GM10248 (cell line): ENCODE measurements at regions of chr22 and their contacts with region 1.

Region 1: DNA sequence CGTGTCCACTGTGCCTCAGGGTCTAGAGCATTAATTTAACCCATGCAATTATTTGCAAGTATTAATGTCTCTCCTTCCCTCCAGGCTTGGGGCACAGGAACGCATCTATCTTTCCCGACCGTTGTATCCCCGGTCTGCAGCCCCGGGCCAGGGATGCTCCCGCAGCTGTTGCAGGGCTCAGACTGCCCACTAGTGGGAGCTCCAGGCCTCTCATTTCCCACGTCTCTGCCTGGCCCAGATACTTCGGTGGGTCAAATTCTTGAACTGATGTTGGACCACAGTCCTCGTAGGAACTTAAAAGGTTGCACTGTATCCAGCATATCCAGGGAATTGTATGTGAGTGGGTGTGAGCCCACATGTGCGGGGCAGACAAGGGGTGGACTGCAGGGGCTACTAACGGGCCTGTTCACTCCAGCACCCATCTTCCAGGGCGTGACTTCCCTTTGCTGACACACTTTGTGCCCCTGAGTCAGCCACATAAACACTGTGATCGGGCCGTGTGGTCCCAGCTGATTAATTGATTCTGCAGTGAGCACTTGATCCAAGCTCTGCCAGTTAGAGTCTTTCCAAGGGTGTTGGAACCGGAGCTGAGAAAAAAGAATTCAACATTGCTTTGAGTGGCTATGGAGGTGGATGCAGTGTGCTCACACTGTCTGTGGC is 451.3 kb downstream of the TBC1D22A start:
- DNase-seq: peak; percentile 67
- CTCF ChIP-seq: peak; percentile 78

Region 2: GRCh38 chr22:47200273-47201051 is 13.2 kb before region 1 on chr22:
- CTCF ChIA-PET with region 1: interaction called, 12 read pairs
- POLR2A ChIA-PET with region 1: no interaction called
- DNase-seq: no peak
- CTCF ChIP-seq: no peak

Region 3: GRCh38 chr22:47251911-47252310 is 38.2 kb after region 1 on chr22:
- CTCF ChIA-PET with region 1: interaction called, 11 read pairs
- POLR2A ChIA-PET with region 1: no interaction called
- DNase-seq: no peak
- CTCF ChIP-seq: no peak